Naive thymus-derived CD4-positive, alpha-beta T cell (primary cell): ENCODE measurements at regions of chr7 and their contacts with region 1.

Region 1: DNA sequence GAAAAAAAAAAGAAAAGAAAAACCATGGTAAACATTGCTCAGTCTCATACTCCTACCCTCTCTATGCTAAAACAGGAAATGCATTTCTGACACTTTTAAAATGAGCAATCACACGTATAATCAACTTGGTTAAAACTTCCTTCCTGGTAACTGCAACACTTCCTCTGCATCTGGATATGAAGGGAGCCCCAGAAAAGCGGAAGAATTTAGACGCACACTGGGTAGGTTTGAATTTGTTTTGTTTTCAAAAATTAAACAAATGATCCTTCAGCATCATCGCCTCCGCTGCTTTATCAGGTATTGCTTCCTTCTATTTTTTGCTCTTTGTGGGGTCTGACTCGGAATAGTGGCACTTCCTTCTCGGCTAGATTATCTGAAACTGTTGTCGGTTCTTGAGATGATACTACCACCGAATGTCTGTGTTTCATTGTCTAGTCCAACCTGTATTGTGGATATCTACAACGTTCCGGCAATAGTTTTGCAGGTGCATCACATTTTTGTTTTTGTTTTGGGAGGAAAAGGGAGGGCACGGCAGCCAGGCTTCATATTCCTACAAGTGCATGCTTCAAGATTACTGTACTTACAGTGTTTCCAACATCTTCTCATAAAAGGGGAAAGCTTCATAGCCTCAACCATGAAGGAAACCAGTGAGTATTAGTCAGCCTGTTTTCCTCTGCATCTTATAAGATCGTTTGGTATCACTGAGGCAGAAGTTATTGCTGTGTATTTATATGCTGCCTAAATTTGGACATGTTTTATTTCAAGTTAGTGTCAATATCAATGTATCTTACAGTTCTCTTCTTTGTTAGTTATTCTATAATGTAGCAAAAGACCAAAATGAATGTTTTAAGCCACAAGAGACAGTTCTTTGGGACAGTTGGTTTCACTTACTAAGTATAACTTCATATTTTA is at the start of gene PIK3CG:
- DNase-seq: peak in 7 of 9 donors; percentile 43 to 77 (median 70)
- ATAC-seq: peak; percentile 96
- H3K4me3 ChIP-seq: peak within 1 kb of the TSS; percentile 62
- H3K4me3 Mint-ChIP-seq: peak within 1 kb of the TSS; percentile 86 to 98 (median 94)
- H3K27ac ChIP-seq: peak within 1 kb of the TSS; percentile 75
- H3K27ac Mint-ChIP-seq: peak within 1 kb of the TSS; percentile 90 to 96 (median 95)
- H3K4me1 ChIP-seq: peaks cover 50% of the 10 kb centered on the region in 2 donors
- H3K4me1 Mint-ChIP-seq: peaks cover 44 to 85% (median 72%) of the 10 kb centered on the region in 7 donors
- H3K27me3 ChIP-seq: no peaks in the 10 kb centered on the region
- H3K27me3 Mint-ChIP-seq: no peaks in the 10 kb centered on the region
- total RNA-seq, gene PIK3CG: 25.1 to 54.9 (median 30.6) TPM

Region 2: DNA sequence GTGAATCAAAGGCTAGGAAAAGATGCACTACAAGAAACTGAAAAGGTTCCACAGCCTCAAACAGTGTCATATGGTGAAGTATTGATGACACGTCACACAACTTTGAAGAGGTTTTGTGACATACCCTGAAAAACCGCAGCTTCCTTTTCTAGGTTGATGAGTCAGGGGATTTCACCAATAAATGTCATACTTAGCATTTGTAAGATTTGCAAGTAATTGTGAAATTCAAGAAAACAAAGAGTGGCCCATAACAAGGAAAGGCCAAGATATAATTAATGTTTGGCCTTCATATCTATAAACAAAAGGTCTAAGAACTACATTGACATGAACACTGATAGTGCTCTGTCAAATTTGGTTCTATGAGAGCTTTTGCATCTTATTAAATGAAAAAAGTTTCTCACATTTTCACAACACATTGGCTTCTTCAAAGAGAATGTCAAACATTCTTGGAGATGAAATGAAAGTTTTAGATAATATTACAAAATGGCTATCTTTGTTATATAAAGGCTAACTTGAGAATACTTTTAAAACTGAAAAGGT is 518.6 kb before region 1 on chr7:
- CTCF ChIA-PET with region 1: no interaction called
- POLR2A ChIA-PET with region 1: no interaction called
- intact Hi-C with region 1: loop called in 1 of 2 experiments (anchors 1 kb)
- DNase-seq: peak in 8 of 9 donors; percentile 28 to 61 (median 50)
- ATAC-seq: peak; percentile 78
- H3K4me3 ChIP-seq: no peak overlapping the region
- H3K4me3 Mint-ChIP-seq: peak overlapping the region in 1 of 10 donors; percentile 47
- H3K27ac ChIP-seq: no peak overlapping the region
- H3K27ac Mint-ChIP-seq: peak overlapping the region in 2 of 9 donors; percentile 19 to 94
- H3K4me1 ChIP-seq: peaks cover 6 to 19% of the 10 kb centered on the region in 2 donors
- H3K4me1 Mint-ChIP-seq: peaks cover 5 to 35% (median 13%) of the 10 kb centered on the region in 7 donors
- H3K27me3 ChIP-seq: no peaks in the 10 kb centered on the region
- H3K27me3 Mint-ChIP-seq: peaks cover 1 to 61% (median 31%) of the 10 kb centered on the region in 5 donors

Region 3: GRCh38 chr7:106618480-106618879 is 246.9 kb before region 1 on chr7:
- CTCF ChIA-PET with region 1: no interaction called
- POLR2A ChIA-PET with region 1: no interaction called
- intact Hi-C with region 1: no loop called
- DNase-seq: no peak
- ATAC-seq: no peak
- H3K4me3 ChIP-seq: no peak overlapping the region
- H3K4me3 Mint-ChIP-seq: no peak overlapping the region
- H3K27ac ChIP-seq: no peak overlapping the region
- H3K27ac Mint-ChIP-seq: no peak overlapping the region
- H3K4me1 ChIP-seq: no peaks in the 10 kb centered on the region
- H3K4me1 Mint-ChIP-seq: no peaks in the 10 kb centered on the region
- H3K27me3 ChIP-seq: no peaks in the 10 kb centered on the region
- H3K27me3 Mint-ChIP-seq: peaks cover 0 to 12% (median 2%) of the 10 kb centered on the region in 5 donors

Region 4: DNA sequence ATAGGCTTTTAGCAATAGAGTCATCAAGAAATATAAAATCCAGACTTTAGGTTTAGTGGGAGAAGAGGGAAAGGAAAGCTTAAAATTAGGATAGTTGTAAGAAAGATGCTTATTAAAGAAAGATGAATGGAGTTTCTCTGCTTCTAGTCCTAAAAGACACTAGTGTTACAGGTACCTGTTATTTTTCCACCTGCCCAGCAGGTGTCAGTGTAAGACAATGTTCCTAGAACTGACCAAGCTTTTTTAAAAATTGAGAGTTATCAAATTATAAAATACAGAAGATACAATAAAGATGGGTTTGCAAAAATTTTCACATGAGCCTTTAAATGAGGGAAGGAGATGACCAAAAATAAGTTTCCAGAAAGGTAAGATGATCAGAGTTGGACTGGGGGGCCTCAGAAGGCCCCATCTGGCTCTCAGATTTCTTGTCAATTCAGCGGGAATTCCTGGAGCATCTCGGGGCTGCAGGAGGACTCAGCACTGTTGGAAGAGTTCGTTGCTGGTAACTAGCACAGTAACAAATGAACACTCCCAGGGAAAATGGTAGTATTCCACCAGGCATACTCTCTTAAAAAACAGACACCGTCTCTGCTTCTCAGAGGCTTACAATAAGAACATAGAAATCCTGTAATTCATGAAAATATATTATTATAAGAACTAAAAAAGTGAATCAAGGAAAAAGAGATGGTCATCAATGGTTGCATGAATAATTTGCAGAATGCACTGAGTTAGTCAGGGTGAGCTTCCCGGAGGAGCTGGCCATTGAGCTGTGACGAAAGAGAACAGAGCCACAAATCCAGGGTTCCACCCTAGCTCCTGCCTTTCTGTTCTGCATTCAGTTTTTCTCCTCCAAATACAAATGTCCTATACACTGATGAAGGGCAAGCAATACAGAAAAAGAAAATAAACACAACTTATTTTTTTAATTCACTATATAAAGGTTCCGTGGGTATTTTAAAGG is 72.1 kb before region 1 on chr7:
- CTCF ChIA-PET with region 1: no interaction called
- POLR2A ChIA-PET with region 1: no interaction called
- intact Hi-C with region 1: loop called (anchors 1 to 5 kb)
- DNase-seq: peak in 6 of 9 donors; percentile 31 to 59 (median 51)
- ATAC-seq: peak; percentile 76
- H3K4me3 ChIP-seq: no peak overlapping the region
- H3K4me3 Mint-ChIP-seq: no peak overlapping the region
- H3K27ac ChIP-seq: no peak overlapping the region
- H3K27ac Mint-ChIP-seq: no peak overlapping the region
- H3K4me1 ChIP-seq: no peaks in the 10 kb centered on the region
- H3K4me1 Mint-ChIP-seq: peaks cover 0 to 4% (median 0%) of the 10 kb centered on the region in 7 donors
- H3K27me3 ChIP-seq: no peaks in the 10 kb centered on the region
- H3K27me3 Mint-ChIP-seq: no peaks in the 10 kb centered on the region

Region 5: GRCh38 chr7:107122486-107122911 is 257.1 kb after region 1 on chr7:
- CTCF ChIA-PET with region 1: no interaction called
- POLR2A ChIA-PET with region 1: interaction called, 3 read pairs
- intact Hi-C with region 1: loop called (anchors 1 to 10 kb)
- DNase-seq: no peak
- ATAC-seq: no peak
- H3K4me3 ChIP-seq: no peak overlapping the region
- H3K4me3 Mint-ChIP-seq: no peak overlapping the region
- H3K27ac ChIP-seq: no peak overlapping the region
- H3K27ac Mint-ChIP-seq: no peak overlapping the region
- H3K4me1 ChIP-seq: peaks cover 4 to 16% of the 10 kb centered on the region in 2 donors
- H3K4me1 Mint-ChIP-seq: peaks cover 12 to 25% (median 20%) of the 10 kb centered on the region in 7 donors
- H3K27me3 ChIP-seq: no peaks in the 10 kb centered on the region
- H3K27me3 Mint-ChIP-seq: peaks cover 0 to 12% (median 0%) of the 10 kb centered on the region in 5 donors

Region 6: DNA sequence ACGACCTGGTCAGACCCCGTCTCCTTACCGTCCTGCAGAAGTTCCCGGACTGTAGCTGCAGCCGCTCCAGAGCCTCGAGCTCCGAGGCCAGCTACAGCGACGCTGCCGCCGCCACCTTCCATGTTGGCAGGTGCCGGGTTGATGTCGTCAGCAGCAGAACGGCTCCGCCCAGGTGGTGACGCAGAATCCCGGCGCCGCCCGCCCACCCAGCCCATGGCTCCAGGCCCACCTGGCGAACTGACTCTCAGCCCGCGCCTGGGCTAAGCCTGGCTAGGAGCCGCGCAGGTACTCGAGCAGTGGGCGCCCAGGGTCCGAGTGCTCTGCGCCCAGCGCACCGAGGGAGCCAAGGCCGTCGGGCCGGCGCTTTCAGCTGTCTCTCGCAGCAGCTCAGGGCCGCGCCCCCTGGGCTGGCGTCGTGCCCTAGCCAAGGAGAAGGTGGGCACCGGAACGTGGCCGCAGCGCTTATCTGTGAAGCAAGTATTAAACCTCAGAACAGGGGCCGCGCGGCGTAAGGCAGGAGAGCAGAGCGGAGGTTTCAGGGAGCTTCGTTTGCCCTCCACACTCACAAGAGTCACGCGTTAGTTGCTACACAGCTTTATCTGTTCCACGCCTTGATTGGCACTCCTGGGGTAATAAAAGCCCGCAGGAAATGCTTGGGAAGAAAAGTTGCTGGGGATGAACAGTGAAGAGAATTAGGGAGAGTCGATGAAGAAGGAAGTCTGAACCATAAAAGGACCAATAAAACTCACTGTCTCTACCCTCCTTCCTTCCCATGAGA is 698.6 kb after region 1 on chr7 and contains the starts of genes COG5 and DUS4L:
- CTCF ChIA-PET with region 1: no interaction called
- POLR2A ChIA-PET with region 1: no interaction called
- intact Hi-C with region 1: loop called in 1 of 2 experiments (anchors 5 kb)
- DNase-seq: peak; percentile 78 to 88 (median 84)
- ATAC-seq: peak; percentile 91
- H3K4me3 ChIP-seq: peak within 1 kb of the TSS; percentile 86
- H3K4me3 Mint-ChIP-seq: peak within 1 kb of the TSS; percentile 76 to 99 (median 91)
- H3K27ac ChIP-seq: peak within 1 kb of the TSS; percentile 98
- H3K27ac Mint-ChIP-seq: peak within 1 kb of the TSS; percentile 87 to 97 (median 93)
- H3K4me1 ChIP-seq: peaks cover 40 to 50% of the 10 kb centered on the region in 2 donors
- H3K4me1 Mint-ChIP-seq: peaks cover 40 to 76% (median 62%) of the 10 kb centered on the region in 7 donors
- H3K27me3 ChIP-seq: no peaks in the 10 kb centered on the region
- H3K27me3 Mint-ChIP-seq: no peaks in the 10 kb centered on the region
- total RNA-seq, gene COG5: 38.3 to 77.0 (median 60.7) TPM
- total RNA-seq, gene DUS4L: 10.0 to 14.1 (median 11.2) TPM

Region 7: DNA sequence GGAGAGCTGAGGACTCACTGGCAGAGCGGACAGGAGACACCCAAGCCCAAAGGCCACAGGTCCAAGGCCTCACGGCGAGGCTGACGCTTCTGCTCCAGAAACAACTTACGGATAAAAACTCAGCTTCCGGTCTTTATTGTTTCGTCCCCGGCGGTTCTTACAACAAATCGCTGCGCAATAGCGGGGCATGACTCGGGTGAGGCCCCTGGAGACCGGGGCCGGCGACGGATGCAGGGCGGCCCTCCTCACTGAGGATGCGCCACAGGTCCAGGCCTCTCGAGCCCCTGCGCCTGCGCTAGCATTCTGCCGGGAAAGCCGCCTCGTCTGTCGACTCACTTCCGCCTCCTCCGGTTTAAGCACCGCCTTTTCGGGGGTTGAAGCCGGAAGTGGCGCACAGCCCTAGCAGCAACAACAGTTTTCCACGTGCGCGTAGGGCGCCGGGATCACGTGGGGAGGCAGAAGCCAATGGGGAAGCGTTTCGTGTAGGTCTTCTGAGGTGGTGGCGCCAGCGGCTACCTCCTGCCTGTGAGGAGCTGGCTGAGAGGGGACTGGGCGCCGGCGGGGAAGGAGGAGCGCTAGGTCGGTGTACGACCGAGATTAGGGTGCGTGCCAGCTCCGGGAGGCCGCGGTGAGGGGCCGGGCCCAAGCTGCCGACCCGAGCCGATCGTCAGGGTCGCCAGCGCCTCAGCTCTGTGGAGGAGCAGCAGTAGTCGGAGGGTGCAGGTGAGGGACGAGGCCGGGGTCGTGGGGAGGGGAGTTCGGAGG is 1704.2 kb after region 1 on chr7 and contains the starts of genes DNAJB9 and THAP5:
- CTCF ChIA-PET with region 1: no interaction called
- POLR2A ChIA-PET with region 1: interaction called, 3 read pairs
- intact Hi-C with region 1: loop called in 1 of 2 experiments (anchors 1 kb)
- DNase-seq: peak; percentile 94 to 100 (median 100)
- ATAC-seq: peak; percentile 94
- H3K4me3 ChIP-seq: peak within 1 kb of the TSS; percentile 86
- H3K4me3 Mint-ChIP-seq: peak within 1 kb of the TSS; percentile 93 to 99 (median 98)
- H3K27ac ChIP-seq: peak within 1 kb of the TSS; percentile 98
- H3K27ac Mint-ChIP-seq: peak within 1 kb of the TSS; percentile 98 to 100 (median 100)
- H3K4me1 ChIP-seq: peaks cover 21 to 34% of the 10 kb centered on the region in 2 donors
- H3K4me1 Mint-ChIP-seq: peaks cover 18 to 81% (median 68%) of the 10 kb centered on the region in 7 donors
- H3K27me3 ChIP-seq: no peaks in the 10 kb centered on the region
- H3K27me3 Mint-ChIP-seq: peaks cover 0 to 3% (median 0%) of the 10 kb centered on the region in 5 donors
- total RNA-seq, gene DNAJB9: 22.7 to 50.0 (median 29.3) TPM
- total RNA-seq, gene THAP5: 21.0 to 54.7 (median 30.8) TPM